AG04449 (cell line): ENCODE measurements at regions of chr22 and their contacts with region 1.

Region 1: GRCh38 chr22:41403532-41404318 is 22.0 kb downstream of the TEF start:
- DNase-seq: no peak
- H3K4me3 ChIP-seq: no peak overlapping the region
- CTCF ChIP-seq: peak; percentile 92

Region 2: DNA sequence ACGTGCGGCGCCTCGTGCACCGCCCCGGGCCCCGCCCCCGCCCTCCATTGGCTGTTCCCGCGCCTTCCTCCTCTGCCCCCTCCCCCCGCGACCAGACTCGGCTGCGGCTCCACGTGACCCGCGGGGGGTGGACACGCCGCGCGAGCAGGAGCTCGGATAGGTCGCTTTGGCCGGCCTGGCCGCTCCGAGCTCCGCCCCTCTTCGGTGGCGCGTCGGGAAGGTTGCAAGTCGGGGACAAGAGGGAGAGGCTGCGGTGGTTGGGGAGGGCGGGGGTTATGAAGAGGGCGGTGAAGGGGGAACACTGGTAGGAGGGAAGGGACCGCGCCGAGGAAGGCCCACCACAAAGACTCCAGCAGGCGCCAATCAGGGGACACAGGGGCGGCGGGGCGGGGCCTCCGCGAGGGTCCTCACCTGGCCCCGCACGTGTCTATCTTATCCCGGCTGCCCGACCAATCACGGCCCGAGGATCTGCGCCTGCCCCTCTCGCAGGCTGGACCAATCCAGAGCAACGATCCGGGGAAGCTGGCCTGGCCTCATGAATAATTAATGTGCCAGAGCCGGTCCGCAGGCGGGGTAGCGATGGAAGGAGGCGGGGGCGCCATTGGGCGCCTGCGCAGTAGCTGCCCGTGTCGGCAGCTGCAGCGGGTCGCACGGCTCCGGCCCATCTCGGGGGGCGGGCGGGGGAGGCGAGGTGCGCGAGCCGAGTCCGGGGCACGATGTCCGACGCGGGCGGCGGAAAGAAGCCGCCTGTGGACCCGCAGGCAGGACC is 22.2 kb before region 1 on chr22 and contains the start of gene TEF:
- CTCF ChIA-PET with region 1: interaction called, 15 read pairs
- POLR2A ChIA-PET with region 1: interaction called, 8 read pairs
- DNase-seq: peak; percentile 91
- H3K4me3 ChIP-seq: peak within 1 kb of the TSS; percentile 79
- CTCF ChIP-seq: no peak

Region 3: GRCh38 chr22:41501209-41501608 is 97.5 kb after region 1 on chr22:
- CTCF ChIA-PET with region 1: interaction called, 16 read pairs
- POLR2A ChIA-PET with region 1: no interaction called
- DNase-seq: no peak
- H3K4me3 ChIP-seq: no peak overlapping the region
- CTCF ChIP-seq: no peak

Region 4: DNA sequence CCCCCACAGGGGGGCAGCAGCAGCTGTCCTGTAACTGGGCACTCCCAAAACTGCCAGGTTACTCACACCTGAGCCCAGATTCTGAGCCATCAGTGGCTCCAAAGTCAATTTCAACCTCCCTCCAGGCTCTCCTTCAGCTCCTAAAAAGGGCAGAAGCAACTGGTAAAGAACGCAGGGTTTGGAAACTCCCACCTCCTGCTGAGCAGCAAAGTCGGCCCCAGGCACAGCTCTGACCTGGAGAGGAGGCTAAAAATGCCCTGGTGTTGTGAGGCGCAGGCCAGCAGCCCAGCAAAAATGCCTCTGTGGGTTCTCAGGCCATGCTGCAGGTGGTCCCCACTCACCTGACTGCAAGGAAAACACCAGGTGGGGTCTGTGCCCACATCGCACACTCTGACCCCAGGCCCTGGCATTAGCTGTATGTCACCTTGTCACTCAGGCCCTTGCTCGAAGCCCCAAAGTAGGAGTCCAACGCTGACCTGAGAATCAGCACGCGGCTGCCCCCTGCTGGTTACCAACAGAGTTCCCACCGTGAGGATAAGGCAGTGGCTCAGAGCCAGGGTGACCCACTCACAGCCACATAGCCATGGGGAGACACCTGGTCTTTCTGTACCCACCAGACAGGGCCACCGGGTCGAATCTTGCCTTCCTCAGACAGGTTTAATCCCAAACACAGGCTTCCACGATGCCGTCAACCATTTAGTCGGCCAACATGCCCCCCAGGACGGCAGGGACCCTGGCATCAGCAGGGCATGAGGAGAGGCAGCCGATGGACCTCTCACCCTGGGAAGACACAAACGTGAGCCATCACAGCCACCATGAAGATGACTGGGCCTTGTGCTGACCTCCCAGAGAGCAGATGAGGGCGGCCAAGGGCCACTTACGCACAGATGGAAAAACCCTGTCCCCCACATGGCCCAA is 129.4 kb after region 1 on chr22:
- CTCF ChIA-PET with region 1: interaction called, 46 read pairs
- POLR2A ChIA-PET with region 1: no interaction called
- DNase-seq: no peak
- H3K4me3 ChIP-seq: no peak overlapping the region
- CTCF ChIP-seq: peak; percentile 85

Region 5: GRCh38 chr22:41625577-41625976 is 221.9 kb after region 1 on chr22:
- CTCF ChIA-PET with region 1: no interaction called
- POLR2A ChIA-PET with region 1: no interaction called
- DNase-seq: no peak
- H3K4me3 ChIP-seq: no peak overlapping the region
- CTCF ChIP-seq: no peak